ENCODE measurements at regions of chr19 and their contacts with region 1.

Region 1: GRCh38 chr19:14674764-14675163 is at the start of gene ADGRE3:
- DNase-seq: peak; percentile 70 to 91 (median 86)
- H3K4me3 ChIP-seq: peak within 1 kb of the TSS; percentile 24 to 72 (median 51)
- H3K4me3 Mint-ChIP-seq: peak within 1 kb of the TSS; percentile 71 to 82
- H3K27ac ChIP-seq: peak within 1 kb of the TSS; percentile 80 to 90
- H3K27ac Mint-ChIP-seq: peak within 1 kb of the TSS in 3 of 7 donors; percentile 97 to 98 (median 97)
- H3K4me1 ChIP-seq: peaks cover 66 to 68% of the 10 kb centered on the region in 2 donors
- H3K4me1 Mint-ChIP-seq: peaks cover 58% of the 10 kb centered on the region
- H3K27me3 ChIP-seq: no peaks in the 10 kb centered on the region
- H3K27me3 Mint-ChIP-seq: no peaks in the 10 kb centered on the region
- CTCF ChIP-seq: no peak
- polyA plus RNA-seq, gene ADGRE3: 27.3 to 92.0 (median 28.3) TPM

Region 2: GRCh38 chr19:14571695-14572490 is 102.9 kb before region 1 on chr19 and contains the start of gene NDUFB7:
- intact Hi-C with region 1: loop called in 1 of 2 experiments (anchors 5 kb)
- DNase-seq: peak; percentile 93 to 96 (median 95)
- H3K4me3 ChIP-seq: peak within 1 kb of the TSS; percentile 58 to 97 (median 97)
- H3K4me3 Mint-ChIP-seq: peak within 1 kb of the TSS; percentile 91 to 94
- H3K27ac ChIP-seq: peak within 1 kb of the TSS; percentile 16 to 88
- H3K27ac Mint-ChIP-seq: peak within 1 kb of the TSS; percentile 88 to 95 (median 92)
- H3K4me1 ChIP-seq: peaks cover 27 to 31% of the 10 kb centered on the region in 2 donors
- H3K4me1 Mint-ChIP-seq: peaks cover 43% of the 10 kb centered on the region
- H3K27me3 ChIP-seq: no peaks in the 10 kb centered on the region
- H3K27me3 Mint-ChIP-seq: no peaks in the 10 kb centered on the region
- CTCF ChIP-seq: peak; percentile 83
- polyA plus RNA-seq, gene NDUFB7: 137 to 313 (median 204) TPM

Region 3: GRCh38 chr19:14614099-14614412 is 60.7 kb before region 1 on chr19:
- intact Hi-C with region 1: loop called in 1 of 2 experiments (anchors 5 kb)
- DNase-seq: peak; percentile 90 to 97 (median 96)
- H3K4me3 ChIP-seq: peak overlapping the region in 1 of 3 experiments; percentile 47
- H3K4me3 Mint-ChIP-seq: peak overlapping the region; percentile 32 to 70
- H3K27ac ChIP-seq: peak overlapping the region; percentile 84 to 89
- H3K27ac Mint-ChIP-seq: peak overlapping the region; percentile 96 to 99 (median 98)
- H3K4me1 ChIP-seq: peaks cover 74 to 87% of the 10 kb centered on the region in 2 donors
- H3K4me1 Mint-ChIP-seq: peaks cover 78% of the 10 kb centered on the region
- H3K27me3 ChIP-seq: no peaks in the 10 kb centered on the region
- H3K27me3 Mint-ChIP-seq: no peaks in the 10 kb centered on the region
- CTCF ChIP-seq: no peak

Region 4: DNA sequence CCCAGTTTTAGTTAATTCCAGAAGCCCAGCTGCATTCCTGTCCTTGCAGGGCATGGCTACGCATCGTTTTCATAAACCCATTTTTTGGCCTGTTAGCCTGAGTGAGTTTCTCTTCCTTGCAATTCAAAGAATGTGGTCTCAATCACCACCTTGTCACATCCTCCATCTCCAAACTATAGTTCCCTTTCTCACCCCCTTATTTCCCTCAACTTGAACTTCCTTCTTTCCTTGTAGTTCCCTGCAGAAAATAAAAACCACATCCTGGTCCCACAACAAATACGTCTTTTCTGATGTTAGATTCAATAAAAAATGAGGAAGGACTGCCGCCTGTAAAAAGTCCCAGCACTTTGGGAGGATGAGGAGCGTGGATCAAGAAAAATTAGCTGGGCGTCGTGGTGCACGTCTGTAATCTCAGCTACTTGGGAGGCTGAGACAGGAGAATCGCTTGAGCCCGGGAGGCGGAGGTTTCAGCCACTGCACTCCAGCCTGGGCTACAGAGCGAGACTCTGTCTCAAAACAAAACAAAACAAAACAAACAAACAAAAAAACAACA is 13.3 kb before region 1 on chr19:
- intact Hi-C with region 1: loop called in 1 of 2 experiments (anchors 1 kb)
- DNase-seq: peak; percentile 79 to 90 (median 79)
- H3K4me3 ChIP-seq: peak overlapping the region in 1 of 3 experiments; percentile 29
- H3K4me3 Mint-ChIP-seq: peak overlapping the region; percentile 25 to 68
- H3K27ac ChIP-seq: peak overlapping the region; percentile 74 to 76
- H3K27ac Mint-ChIP-seq: peak overlapping the region; percentile 88 to 98 (median 94)
- H3K4me1 ChIP-seq: peaks cover 30 to 31% of the 10 kb centered on the region in 2 donors
- H3K4me1 Mint-ChIP-seq: peaks cover 30% of the 10 kb centered on the region
- H3K27me3 ChIP-seq: no peaks in the 10 kb centered on the region
- H3K27me3 Mint-ChIP-seq: peaks cover 0 to 6% (median 2%) of the 10 kb centered on the region in 3 donors
- CTCF ChIP-seq: no peak

Region 5: DNA sequence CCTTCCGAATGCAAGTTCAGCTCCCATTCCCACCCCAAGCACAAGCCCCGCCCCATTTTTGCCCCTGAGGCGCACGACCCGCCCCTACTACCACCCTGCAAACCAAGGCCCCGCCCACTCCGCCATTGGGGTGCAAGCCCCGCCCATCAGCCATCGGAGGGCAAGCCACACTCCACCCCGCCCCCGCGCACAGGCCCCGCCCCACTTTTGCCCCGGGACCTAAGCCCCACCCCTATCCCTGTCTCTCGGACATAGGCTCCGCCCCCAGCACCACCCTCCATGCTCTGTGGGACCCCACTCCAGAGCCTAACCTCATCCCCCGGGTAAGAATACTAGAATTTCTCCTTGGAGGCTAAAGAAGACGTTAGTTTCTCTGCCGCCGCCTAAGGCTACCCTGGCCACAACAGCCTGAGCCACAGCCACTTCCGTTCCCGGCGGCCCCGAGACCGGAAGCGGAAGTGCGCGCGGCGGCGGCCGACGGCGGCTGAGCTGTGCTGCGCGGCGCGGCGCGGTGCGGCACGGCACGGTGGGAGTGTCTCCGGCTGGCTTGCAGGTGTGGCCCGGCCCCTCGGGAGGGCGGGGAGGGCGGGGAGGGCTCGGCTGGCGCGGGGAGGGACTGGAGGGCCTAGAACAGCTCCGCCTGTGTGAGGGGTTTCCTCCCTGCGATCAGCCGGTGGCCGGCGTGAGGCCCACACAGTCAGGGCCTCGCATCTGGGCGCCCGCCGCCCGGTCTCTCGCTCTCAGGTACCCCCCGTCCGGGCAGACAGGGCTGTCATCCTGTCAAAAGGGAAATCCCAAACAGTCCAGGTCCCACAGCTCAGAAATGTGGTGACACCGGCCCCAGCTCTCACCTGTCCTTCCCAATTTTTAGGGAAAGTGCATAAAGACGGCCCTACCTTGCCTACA is 15.1 kb after region 1 on chr19 and contains the start of gene ZNF333:
- intact Hi-C with region 1: loop called (anchors 2 kb)
- DNase-seq: peak; percentile 79 to 83 (median 83)
- H3K4me3 ChIP-seq: peak within 1 kb of the TSS; percentile 62 to 89 (median 85)
- H3K4me3 Mint-ChIP-seq: peak within 1 kb of the TSS; percentile 92 to 96
- H3K27ac ChIP-seq: peak within 1 kb of the TSS; percentile 93 to 95
- H3K27ac Mint-ChIP-seq: peak within 1 kb of the TSS; percentile 96 to 100 (median 100)
- H3K4me1 ChIP-seq: peaks cover 29 to 36% of the 10 kb centered on the region in 2 donors
- H3K4me1 Mint-ChIP-seq: peaks cover 34% of the 10 kb centered on the region
- H3K27me3 ChIP-seq: no peaks in the 10 kb centered on the region
- H3K27me3 Mint-ChIP-seq: no peaks in the 10 kb centered on the region
- CTCF ChIP-seq: no peak
- polyA plus RNA-seq, gene ZNF333: 7.6 to 43.0 (median 9.3) TPM

Region 6: DNA sequence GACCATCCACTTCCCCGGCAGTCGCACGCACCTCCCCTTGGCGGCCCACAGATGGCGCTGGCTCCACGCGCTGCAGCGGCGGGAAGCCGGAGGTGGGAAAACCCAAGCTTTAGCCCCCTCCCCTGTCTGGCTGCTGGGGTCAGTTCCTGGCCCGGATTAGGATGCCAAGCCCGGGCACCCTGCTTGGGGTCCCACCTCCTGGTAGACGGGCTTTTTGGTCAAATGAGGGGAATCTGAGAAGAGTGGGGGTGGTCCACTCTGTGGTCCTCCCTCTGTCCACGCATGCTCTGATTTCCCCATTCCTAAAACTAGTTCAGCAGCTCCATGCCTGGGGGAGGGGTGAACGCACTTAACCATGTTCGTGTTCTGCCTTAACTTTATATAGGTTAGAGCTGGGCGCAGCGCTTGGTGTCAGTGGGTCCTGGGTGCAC is 111.7 kb after region 1 on chr19:
- intact Hi-C with region 1: loop called in 1 of 2 experiments (anchors 10 kb)
- DNase-seq: peak in 2 of 3 donors; percentile 41 to 73
- H3K4me3 ChIP-seq: peak overlapping the region in 1 of 3 experiments; percentile 24
- H3K4me3 Mint-ChIP-seq: peak overlapping the region in 1 of 2 donors; percentile 55
- H3K27ac ChIP-seq: peak overlapping the region; percentile 92 to 95
- H3K27ac Mint-ChIP-seq: peak overlapping the region; percentile 98 to 100 (median 99)
- H3K4me1 ChIP-seq: peaks cover 54 to 61% of the 10 kb centered on the region in 2 donors
- H3K4me1 Mint-ChIP-seq: peaks cover 54% of the 10 kb centered on the region
- H3K27me3 ChIP-seq: no peaks in the 10 kb centered on the region
- H3K27me3 Mint-ChIP-seq: peaks cover 0 to 11% (median 2%) of the 10 kb centered on the region in 3 donors
- CTCF ChIP-seq: peak; percentile 97